Activated naive CD4-positive, alpha-beta T cell treated with anti-CD3 and anti-CD28 coated beads for 36 hours (primary cell): ENCODE measurements at regions of chr16 and their contacts with region 1.

Region 1: DNA sequence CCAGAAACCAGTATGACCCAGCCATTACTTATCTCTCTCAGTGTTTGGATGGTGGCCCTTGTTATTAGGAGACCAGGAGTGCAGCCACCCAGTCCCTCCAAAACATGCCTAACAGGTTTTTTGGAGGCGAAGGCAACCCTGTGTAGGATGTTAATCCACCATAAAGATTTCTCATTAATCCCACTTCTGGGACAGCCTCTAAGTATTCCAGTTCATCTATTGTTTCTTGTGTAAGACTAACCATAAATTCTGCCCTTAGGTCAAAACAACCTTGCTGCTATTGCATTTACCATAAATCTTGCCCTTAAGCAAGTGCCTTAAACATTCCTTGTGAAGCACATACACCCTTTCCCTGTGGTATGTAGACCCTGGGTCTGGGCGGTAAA is 21.5 kb upstream of the OR1F1 start:
- DNase-seq: no peak
- H3K4me3 Mint-ChIP-seq: no peak overlapping the region
- H3K27ac Mint-ChIP-seq: no peak overlapping the region
- H3K4me1 Mint-ChIP-seq: peaks cover 19% of the 10 kb centered on the region
- H3K27me3 Mint-ChIP-seq: peaks cover 12% of the 10 kb centered on the region

Region 2: DNA sequence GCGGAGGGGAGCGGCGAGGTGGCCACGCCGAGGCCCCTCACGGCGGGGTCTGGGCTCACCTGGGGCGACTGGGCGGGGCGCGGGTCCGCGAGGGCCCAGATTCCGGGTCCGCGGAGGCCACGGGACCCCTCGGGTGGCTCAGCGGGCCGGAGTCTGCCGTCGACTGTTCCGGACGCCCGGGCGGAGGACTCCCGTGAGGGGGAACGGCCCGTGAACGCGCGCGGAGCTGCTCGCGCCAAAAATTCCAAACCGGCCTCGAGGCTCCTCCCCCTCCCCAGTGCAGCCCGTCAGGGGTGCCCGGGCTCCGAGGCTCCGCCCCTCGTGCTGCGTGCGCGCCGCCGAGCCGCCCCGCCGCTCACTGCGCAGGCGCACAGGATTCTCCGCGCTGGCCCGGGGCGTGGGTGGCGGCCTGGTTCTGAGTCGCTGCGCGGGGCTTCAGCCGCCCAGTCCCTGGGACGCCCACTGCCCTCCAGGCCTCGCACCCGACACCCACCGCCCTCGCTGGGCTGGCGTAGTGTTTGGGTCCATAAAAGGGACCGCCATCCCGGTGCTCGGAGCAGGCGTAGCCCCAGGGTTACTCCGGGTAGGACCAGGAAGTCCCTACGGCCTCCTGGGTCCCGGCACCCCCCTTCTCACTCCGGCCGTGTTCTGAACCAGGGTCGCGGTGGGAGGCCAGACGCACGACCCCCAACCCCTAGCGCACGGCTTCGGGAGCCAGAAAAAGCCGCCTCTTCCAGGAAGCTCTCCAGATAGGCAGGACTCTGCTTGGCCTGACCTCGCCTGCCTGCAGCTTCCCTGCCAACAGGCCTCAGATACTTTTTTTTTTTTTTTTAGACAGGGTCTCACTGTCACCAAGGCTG is 186.0 kb before region 1 on chr16 and contains the start of gene PKMYT1:
- CTCF ChIA-PET with region 1: no interaction called
- intact Hi-C with region 1: no loop called
- DNase-seq: peak; percentile 95
- H3K4me3 Mint-ChIP-seq: peak within 1 kb of the TSS; percentile 81
- H3K27ac Mint-ChIP-seq: peak within 1 kb of the TSS; percentile 84
- H3K4me1 Mint-ChIP-seq: peaks cover 14% of the 10 kb centered on the region
- H3K27me3 Mint-ChIP-seq: no peaks in the 10 kb centered on the region
- total RNA-seq, gene PKMYT1: 128 to 136 TPM

Region 3: DNA sequence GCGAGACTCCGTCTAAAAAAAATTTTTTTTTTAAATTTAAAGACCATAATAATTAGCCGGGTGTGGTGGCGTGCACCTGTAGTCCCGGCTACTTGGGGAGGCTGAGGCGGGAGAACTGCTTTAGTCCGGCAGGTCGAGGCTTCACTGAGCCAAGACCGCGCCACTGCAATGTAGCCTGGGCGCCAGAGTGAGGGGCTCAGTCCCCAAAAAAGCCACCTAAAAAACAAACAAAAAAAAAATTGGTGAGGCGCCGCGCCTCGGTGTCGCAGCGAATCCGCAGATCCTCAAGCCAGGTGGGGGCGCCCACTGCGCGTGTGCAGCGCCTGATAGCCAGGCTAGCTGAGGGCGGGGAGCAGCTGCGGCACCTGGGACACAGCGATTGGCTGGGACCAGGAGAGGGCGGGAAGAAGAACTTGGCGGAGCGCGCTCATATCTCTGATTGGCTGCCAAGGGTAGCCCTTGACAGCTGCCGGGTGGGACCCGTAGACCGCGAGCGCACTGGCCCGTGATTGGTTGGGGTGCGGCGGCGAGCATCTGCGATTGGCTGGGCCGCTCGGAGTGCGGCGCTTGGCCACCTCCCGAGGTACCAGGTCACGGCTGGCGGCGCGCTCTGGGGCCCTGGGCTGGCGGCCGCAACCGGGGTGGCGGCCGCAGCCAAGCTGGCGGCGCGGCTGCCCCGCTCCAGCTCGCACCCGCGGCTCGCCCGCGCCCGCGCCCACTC is 162.8 kb before region 1 on chr16:
- CTCF ChIA-PET with region 1: no interaction called
- intact Hi-C with region 1: loop called (anchors 1 kb)
- DNase-seq: peak; percentile 98
- H3K4me3 Mint-ChIP-seq: peak overlapping the region; percentile 49
- H3K27ac Mint-ChIP-seq: no peak overlapping the region
- H3K4me1 Mint-ChIP-seq: peaks cover 23% of the 10 kb centered on the region
- H3K27me3 Mint-ChIP-seq: peaks cover 2% of the 10 kb centered on the region

Region 4: GRCh38 chr16:3099732-3100499 is 66.6 kb before region 1 on chr16:
- CTCF ChIA-PET with region 1: interaction called, 5 read pairs
- intact Hi-C with region 1: loop called (anchors 2 kb)
- DNase-seq: peak; percentile 97
- H3K4me3 Mint-ChIP-seq: peak overlapping the region; percentile 69
- H3K27ac Mint-ChIP-seq: no peak overlapping the region
- H3K4me1 Mint-ChIP-seq: peaks cover 36% of the 10 kb centered on the region
- H3K27me3 Mint-ChIP-seq: no peaks in the 10 kb centered on the region

Region 5: GRCh38 chr16:3134564-3135417 is 31.7 kb before region 1 on chr16 and contains the start of gene ZNF213:
- CTCF ChIA-PET with region 1: interaction called, 37 read pairs
- intact Hi-C with region 1: loop called (anchors 1 kb)
- DNase-seq: peak; percentile 97
- H3K4me3 Mint-ChIP-seq: peak within 1 kb of the TSS; percentile 99
- H3K27ac Mint-ChIP-seq: peak within 1 kb of the TSS; percentile 91
- H3K4me1 Mint-ChIP-seq: peaks cover 29% of the 10 kb centered on the region
- H3K27me3 Mint-ChIP-seq: no peaks in the 10 kb centered on the region
- total RNA-seq, gene ZNF213: 6.1 to 6.5 TPM